Activated CD4-positive, alpha-beta T cell treated with anti-CD3 and anti-CD28 coated beads for 36 hours (primary cell): ENCODE measurements at regions of chr11 and their contacts with region 1.

Region 1: DNA sequence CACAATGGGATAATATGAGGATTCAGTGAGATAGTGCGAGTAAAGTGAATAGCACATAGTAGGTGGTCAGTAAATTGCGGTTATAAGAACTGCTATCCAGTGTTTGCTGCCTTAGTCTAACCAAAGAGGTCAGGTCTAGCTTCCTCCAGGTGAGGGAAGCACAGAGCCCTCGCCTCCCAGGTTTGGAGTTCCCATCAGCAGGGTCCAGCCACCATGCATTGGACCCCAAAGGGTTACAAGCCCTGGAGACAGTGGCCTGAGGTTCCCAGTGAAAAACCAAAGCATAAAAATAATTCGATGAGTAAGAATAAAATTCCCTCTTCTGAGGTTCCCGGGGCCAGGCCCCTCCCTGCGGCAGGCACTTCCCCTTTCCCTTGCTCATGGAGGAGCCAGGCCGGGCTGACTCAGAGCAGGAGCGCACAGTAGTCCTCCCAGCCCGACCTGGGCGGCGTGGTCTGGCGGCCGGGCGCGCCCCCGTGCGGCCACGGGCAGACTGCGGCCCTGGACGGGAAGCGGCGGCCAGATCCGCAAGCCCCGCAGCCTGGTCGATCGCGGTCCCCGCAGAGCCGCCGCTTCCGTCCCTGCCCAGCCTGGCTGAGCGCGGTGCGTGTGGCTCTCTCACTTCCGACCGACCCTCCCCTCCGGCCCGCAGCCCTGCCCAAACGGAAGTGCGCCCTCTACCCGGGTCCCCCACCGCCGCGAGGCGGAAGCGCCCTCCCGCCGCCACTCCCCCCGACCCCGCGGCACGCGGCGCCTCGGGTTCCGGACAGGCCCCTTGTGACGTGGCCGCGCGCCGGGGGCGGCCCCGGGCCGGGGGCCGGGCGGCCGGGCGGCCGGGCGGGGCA is at the start of gene SLC39A13:
- DNase-seq: peak; percentile 95
- ATAC-seq: peak; percentile 91
- H3K4me3 Mint-ChIP-seq: peak within 1 kb of the TSS; percentile 89
- H3K27ac Mint-ChIP-seq: peak within 1 kb of the TSS; percentile 94
- H3K4me1 Mint-ChIP-seq: peaks cover 16% of the 10 kb centered on the region
- H3K27me3 Mint-ChIP-seq: no peaks in the 10 kb centered on the region
- total RNA-seq, gene SLC39A13: 8.6 to 10.7 TPM

Region 2: DNA sequence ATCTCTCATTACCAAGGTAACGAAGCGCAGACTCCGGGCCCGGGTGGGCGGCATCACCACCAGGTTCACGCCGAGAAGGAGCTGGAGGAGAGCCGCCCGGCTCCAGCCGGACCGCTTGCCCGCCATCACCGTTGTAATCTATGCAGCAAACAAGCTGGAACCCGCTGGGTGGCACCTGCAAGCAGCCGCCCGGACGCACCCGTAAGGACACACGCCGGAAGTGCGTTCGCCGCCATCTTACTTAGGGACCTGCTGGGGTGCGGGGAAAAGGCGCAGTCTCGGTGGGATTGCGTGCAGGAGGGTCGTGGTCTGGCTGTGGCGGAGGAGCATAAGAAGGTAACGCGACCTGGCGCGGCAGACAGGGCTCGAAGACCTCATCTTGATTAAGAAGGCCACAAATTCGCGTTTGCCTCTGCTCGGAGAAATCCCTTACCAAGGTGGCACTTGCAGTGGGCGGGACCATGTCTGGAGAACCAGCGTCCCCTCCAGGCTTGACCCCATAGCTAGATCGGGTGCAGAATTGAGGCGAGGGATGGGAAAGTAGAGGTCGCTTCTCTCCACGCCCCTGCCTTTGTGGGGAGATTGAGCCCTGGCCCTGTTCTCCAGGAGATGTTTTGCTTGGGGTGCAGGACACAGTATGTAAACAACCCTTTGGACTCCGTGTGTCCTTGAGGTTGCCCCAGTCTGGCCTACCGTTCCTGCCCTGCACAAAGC is 159.1 kb before region 1 on chr11 and contains the start of gene ACP2:
- CTCF ChIA-PET with region 1: interaction called, 4 read pairs
- POLR2A ChIA-PET with region 1: no interaction called
- intact Hi-C with region 1: loop called in 1 of 2 experiments (anchors 1 kb)
- DNase-seq: peak; percentile 94
- ATAC-seq: peak; percentile 97
- H3K4me3 Mint-ChIP-seq: peak within 1 kb of the TSS; percentile 78
- H3K27ac Mint-ChIP-seq: peak within 1 kb of the TSS; percentile 95
- H3K4me1 Mint-ChIP-seq: peaks cover 22% of the 10 kb centered on the region
- H3K27me3 Mint-ChIP-seq: no peaks in the 10 kb centered on the region
- total RNA-seq, gene ACP2: 10.2 to 11.2 TPM

Region 3: DNA sequence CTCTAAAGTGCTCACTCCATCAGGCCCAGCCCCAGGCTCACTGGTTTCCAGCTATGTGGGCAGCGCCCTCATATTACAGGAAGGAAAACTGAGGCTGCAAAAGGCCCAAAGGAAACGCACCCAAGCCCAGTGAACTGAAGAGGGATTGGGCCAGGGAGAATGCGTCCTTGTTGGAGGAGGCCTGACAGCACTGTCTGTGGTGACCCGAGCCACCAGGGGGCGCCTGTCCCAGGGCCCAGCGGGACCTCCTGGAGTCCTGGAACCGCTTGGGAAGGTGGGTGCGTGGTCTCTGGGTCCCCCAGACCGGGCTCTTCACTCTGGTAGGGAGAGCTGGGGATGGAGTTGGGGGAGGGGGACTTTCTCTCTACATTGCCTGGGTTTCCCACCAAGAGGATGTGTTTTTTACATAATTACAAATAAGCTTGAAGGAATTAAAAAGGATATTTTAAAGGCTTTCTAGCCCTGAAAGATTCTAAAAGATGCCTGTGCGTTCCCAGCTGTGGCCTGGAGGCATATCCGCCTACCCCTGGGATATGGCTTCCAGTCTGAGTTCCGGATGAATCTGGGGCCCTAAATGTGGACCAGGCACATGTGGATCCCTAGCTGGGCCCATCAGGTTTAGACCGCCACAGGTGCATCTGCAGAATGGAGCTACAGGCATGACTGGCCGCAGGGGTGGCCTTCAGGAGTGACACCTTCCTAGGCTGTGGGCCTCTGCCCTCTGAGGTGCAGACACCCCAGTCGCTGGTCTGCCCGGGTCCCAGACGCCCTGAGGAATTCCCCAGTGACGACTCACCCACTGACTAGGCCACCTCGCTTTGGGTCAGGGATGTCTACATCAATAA is 33.9 kb before region 1 on chr11:
- CTCF ChIA-PET with region 1: interaction called, 29 read pairs
- POLR2A ChIA-PET with region 1: interaction called, 3 read pairs
- intact Hi-C with region 1: loop called (anchors 1 kb)
- DNase-seq: peak; percentile 92
- ATAC-seq: peak; percentile 89
- H3K4me3 Mint-ChIP-seq: no peak overlapping the region
- H3K27ac Mint-ChIP-seq: peak overlapping the region; percentile 25
- H3K4me1 Mint-ChIP-seq: peaks cover 22% of the 10 kb centered on the region
- H3K27me3 Mint-ChIP-seq: no peaks in the 10 kb centered on the region

Region 4: DNA sequence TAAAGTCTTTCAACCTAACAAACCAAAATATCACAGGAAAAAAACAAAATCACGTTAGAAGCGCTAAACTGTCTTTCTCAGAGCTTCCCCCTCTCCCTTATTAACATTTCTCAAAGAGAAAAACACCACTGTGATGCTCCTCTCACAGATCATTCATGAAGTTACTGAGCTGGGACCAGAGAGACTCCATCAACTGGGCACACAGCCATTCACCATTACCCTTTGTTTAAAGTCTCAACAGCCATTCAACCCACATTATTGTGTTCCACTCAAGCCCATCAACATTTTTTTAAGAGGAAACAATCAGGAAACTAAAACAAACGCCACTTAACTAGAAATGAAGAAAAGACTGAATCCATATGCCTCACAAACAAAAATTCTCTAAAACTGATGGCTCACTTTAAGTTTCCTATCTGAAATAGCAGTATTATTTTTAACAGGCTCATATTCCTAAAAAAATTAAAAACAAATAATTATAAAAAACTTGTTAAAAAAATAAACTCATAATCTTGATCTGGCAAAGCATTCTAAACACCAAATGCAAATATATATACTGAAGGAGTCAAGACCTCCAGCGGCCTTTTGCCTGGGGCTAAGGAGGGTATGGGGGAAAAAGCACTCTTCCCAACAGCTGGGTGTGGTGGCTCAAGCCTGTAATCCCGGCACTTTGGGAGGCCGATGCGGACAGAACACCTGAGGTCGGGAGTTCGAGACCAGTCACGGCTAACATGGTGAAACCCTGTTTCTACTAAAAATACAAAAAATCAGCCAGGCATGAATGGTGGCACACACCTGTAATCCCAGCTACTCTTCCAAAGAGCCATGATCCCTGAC is 131.0 kb after region 1 on chr11:
- CTCF ChIA-PET with region 1: no interaction called
- POLR2A ChIA-PET with region 1: no interaction called
- intact Hi-C with region 1: no loop called
- DNase-seq: no peak
- ATAC-seq: no peak
- H3K4me3 Mint-ChIP-seq: no peak overlapping the region
- H3K27ac Mint-ChIP-seq: peak overlapping the region; percentile 83
- H3K4me1 Mint-ChIP-seq: peaks cover 71% of the 10 kb centered on the region
- H3K27me3 Mint-ChIP-seq: no peaks in the 10 kb centered on the region

Region 5: GRCh38 chr11:47578524-47579460 is 170.8 kb after region 1 on chr11 and contains the starts of genes KBTBD4 and NDUFS3:
- CTCF ChIA-PET with region 1: interaction called, 3 read pairs
- POLR2A ChIA-PET with region 1: no interaction called
- intact Hi-C with region 1: loop called in 1 of 2 experiments (anchors 1 kb)
- DNase-seq: peak; percentile 92
- ATAC-seq: peak; percentile 96
- H3K4me3 Mint-ChIP-seq: peak within 1 kb of the TSS; percentile 87
- H3K27ac Mint-ChIP-seq: peak within 1 kb of the TSS; percentile 93
- H3K4me1 Mint-ChIP-seq: peaks cover 39% of the 10 kb centered on the region
- H3K27me3 Mint-ChIP-seq: no peaks in the 10 kb centered on the region
- total RNA-seq, gene KBTBD4: 11.9 to 18.4 TPM
- total RNA-seq, gene NDUFS3: 96.9 to 108 TPM

Region 6: DNA sequence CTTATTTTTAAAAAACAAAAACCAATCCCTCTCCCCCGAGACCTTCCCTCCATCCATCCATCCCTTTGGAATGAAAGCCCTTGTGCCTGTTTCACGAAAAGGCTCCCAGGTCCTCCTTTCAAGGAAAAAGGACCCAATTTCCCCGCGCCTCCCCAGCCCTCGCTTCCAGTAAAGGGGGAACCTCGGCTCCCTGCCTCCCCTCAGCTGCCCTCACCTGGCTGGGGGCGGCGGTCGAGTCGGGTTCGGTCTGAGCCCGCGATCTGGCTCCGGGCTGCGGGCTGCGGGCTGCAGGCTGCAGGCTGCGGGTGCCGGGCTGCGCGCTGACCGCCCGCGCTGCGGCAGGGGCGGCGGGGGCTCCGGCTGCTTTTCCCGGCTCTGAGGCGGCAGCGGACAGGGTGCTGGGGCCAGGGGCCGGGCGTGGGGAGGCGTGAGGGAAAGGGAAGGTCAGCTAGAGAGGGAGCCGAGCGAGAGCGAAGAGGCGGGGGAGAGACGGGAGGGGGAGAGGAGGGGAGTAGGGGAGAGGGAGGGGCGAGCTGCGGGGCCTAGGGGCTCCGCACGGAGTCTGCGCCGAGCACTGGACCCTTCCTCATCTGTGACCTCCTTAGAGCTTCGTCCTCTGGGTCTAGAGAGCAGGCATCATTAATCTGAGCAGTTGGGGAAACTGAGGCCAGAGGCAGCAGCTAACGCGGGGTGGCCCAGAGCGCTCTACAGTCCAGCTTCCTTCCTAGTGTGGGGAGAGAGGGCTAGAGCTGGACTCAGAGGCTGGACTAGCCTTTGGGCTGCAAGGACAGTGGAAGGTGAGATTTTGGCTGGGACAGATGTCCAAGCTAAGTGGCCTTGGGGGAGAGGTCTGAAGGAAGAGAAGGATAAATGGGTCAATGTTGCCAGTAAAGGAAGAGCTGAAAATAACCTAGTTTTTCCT is 186.2 kb after region 1 on chr11 and contains the start of gene C1QTNF4:
- CTCF ChIA-PET with region 1: no interaction called
- POLR2A ChIA-PET with region 1: no interaction called
- intact Hi-C with region 1: no loop called
- DNase-seq: no peak
- ATAC-seq: no peak
- H3K4me3 Mint-ChIP-seq: no peak within 1 kb of the TSS
- H3K27ac Mint-ChIP-seq: no peak within 1 kb of the TSS
- H3K4me1 Mint-ChIP-seq: peaks cover 4% of the 10 kb centered on the region
- H3K27me3 Mint-ChIP-seq: peaks cover 29% of the 10 kb centered on the region
- total RNA-seq, gene C1QTNF4: 0.14 TPM in 1 of 2 experiments, not detected in the other

Region 7: GRCh38 chr11:47847892-47848635 is 440.1 kb after region 1 on chr11 and contains the start of gene NUP160:
- CTCF ChIA-PET with region 1: no interaction called
- POLR2A ChIA-PET with region 1: no interaction called
- intact Hi-C with region 1: loop called in 1 of 2 experiments (anchors 1 kb)
- DNase-seq: peak; percentile 94
- ATAC-seq: peak; percentile 88
- H3K4me3 Mint-ChIP-seq: peak within 1 kb of the TSS; percentile 90
- H3K27ac Mint-ChIP-seq: peak within 1 kb of the TSS; percentile 99
- H3K4me1 Mint-ChIP-seq: peaks cover 44% of the 10 kb centered on the region
- H3K27me3 Mint-ChIP-seq: no peaks in the 10 kb centered on the region
- total RNA-seq, gene NUP160: 67.1 to 84.5 TPM